PC-3 (cell line): ENCODE measurements at regions of chrX and their contacts with region 1.

Region 1: DNA sequence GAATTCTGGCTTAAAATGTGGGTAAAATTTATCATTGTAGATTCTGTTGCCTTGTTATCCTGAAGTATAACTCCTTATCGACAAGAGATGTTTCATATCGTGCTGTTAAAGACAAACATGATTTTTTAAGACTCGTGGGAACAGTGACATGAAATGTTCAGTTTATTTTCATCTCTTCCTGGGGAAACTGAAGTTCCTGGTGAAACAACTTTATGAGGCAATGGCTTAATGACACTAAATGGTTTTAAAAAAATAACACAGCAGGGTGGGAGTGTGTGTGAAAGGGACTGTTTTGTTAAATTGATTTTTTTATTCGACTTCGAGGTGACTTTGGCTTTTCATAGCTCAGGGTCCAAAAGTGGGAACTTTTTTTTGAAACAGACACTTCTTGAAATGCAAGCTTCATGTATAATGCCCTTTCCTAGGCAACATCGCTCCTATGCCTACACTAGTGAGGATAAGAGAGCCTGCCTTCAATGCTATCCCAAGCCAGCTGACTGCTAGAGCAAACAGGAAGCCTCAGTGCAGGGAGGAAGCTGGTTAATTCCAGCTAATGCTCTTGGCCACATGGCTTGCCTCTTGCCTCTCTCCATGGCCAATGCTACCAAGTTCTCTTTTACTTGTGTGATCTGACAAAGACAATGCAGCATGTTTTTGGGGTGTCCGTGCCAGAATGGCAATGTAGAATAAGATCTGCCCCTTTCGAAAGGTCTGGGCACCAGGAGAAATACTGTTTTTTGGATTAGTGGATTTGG is 80.9 kb upstream of the PLAC1 start:
- DNase-seq: no peak
- ATAC-seq: no peak
- H3K4me3 ChIP-seq: no peak overlapping the region
- H3K27ac ChIP-seq: no peak overlapping the region
- H3K4me1 ChIP-seq: no peaks in the 10 kb centered on the region
- H3K27me3 ChIP-seq: no peaks in the 10 kb centered on the region
- CTCF ChIP-seq: no peak

Region 2: DNA sequence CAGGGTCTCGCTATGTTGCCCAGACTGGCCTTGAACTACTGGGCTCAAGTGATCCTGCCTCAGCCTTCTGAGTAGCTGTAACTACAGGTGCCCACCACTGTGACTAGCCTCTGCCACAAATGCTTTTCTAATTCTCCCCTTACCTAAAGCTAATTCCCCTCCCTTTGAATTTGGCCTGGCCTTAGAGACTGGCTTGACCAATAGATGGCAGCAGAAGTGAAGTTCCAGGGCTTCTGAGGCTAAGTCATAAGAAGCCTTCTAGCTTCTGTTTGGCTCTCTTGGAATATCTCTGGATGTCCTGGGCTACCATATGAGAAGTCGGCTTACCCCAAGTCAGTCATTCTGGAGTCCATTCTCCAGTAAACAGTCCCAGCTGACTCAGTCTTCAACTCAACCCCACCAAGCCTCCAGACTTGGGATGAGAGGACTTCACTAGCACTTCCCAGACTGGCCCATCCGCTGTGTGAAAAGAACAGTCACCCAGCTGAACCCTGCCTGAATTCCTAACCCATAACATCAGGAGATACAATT is 218.2 kb before region 1 on chrX:
- CTCF ChIA-PET with region 1: no interaction called
- POLR2A ChIA-PET with region 1: interaction called, 10 read pairs
- intact Hi-C with region 1: no loop called
- DNase-seq: peak; percentile 79
- ATAC-seq: peak; percentile 99
- H3K4me3 ChIP-seq: no peak overlapping the region
- H3K27ac ChIP-seq: no peak overlapping the region
- H3K4me1 ChIP-seq: no peaks in the 10 kb centered on the region
- H3K27me3 ChIP-seq: no peaks in the 10 kb centered on the region
- CTCF ChIP-seq: peak; percentile 80